GM10248 (cell line): ENCODE measurements at regions of chr2 and their contacts with region 1.

Region 1: DNA sequence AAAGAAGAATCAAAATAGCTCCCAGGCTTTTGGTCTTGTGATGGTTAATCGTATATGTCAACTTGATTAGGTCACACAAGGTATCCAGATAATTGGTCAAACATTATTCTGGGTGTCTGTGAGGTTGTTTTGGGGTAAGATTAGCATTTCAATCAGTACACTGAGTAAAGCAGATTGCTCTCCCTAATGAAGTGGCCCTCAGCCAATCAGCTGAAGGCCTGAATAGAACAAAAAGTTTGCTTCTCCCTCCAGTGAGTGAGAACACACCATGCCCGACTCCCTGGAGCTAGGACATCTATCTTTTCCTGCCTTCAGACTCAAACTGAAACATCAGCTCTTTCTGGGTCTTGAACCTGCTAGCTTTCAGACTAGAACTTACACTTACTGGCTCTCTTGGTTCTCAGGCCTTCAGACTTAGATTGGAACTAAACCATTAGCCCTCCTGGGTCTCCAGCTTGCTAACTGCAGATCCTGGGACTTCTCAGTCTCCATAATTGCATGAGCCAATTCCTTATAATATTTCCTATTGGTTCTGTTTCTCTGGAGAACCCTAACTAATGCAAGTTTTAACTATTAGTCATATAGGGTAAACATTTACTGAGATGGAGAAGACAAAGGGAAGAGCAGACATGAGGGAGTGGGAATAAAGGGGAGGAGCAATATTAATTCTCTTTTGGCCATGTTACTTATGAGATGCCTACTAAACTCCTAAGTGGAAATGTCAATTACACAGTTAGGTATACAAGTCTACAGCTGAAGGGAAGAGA is 25.5 kb downstream of the LNPK start:
- DNase-seq: no peak
- CTCF ChIP-seq: no peak

Region 2: GRCh38 chr2:176001916-176002687 is 25.5 kb after region 1 on chr2 and contains the start of gene LNPK:
- CTCF ChIA-PET with region 1: interaction called, 15 read pairs
- POLR2A ChIA-PET with region 1: no interaction called
- DNase-seq: peak; percentile 95
- CTCF ChIP-seq: no peak

Region 3: GRCh38 chr2:176187899-176188773 is 211.6 kb after region 1 on chr2 and contains the start of gene HOXD1:
- CTCF ChIA-PET with region 1: no interaction called
- POLR2A ChIA-PET with region 1: no interaction called
- DNase-seq: peak; percentile 49
- CTCF ChIP-seq: no peak